Activated naive CD4-positive, alpha-beta T cell treated with anti-CD3 and anti-CD28 coated beads for 36 hours (primary cell): ENCODE measurements at regions of chr7 and their contacts with region 1.

Region 1: DNA sequence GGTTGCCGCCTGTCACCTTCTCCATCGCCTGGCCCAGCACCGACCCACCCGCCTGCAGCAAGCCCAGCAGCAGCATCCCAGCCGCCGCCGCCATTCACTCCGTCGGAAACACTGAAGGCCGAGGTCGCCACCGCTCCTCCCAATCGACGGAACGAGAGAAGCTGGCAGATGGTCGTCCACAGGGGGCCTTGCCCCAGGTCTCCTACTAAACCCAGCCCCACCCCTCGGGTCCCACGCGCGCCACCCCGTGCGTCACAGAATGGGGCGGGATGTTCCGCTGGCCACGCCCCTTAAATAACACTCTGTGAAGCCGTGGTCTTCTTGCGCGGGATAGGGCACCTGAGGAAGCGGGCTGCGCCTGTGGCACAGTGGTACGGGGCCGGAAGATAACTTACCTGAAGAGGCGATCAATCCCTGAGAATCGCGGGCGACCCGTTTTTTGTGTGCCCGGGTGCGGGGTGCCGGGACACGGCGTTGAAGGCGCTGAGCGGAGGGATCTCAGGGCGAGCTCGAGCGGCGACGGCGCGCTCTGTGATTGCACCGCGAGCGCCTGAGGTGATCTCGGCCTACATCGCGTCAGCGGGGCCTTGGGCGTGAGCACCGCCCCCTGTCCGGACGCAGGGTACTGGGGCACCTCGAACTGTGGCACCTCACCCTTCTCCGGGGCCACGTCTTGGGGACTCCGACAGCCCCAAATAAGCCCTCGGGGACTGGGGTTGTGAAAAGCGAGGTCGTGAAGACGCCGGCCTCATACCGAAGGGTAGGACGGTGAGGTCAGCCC is at the start of gene CYP51A1:
- DNase-seq: peak; percentile 93
- H3K4me3 Mint-ChIP-seq: peak within 1 kb of the TSS; percentile 96
- H3K27ac Mint-ChIP-seq: peak within 1 kb of the TSS; percentile 99
- H3K4me1 Mint-ChIP-seq: peaks cover 36% of the 10 kb centered on the region
- H3K27me3 Mint-ChIP-seq: no peaks in the 10 kb centered on the region
- total RNA-seq, gene CYP51A1: 52.8 to 55.5 TPM

Region 2: DNA sequence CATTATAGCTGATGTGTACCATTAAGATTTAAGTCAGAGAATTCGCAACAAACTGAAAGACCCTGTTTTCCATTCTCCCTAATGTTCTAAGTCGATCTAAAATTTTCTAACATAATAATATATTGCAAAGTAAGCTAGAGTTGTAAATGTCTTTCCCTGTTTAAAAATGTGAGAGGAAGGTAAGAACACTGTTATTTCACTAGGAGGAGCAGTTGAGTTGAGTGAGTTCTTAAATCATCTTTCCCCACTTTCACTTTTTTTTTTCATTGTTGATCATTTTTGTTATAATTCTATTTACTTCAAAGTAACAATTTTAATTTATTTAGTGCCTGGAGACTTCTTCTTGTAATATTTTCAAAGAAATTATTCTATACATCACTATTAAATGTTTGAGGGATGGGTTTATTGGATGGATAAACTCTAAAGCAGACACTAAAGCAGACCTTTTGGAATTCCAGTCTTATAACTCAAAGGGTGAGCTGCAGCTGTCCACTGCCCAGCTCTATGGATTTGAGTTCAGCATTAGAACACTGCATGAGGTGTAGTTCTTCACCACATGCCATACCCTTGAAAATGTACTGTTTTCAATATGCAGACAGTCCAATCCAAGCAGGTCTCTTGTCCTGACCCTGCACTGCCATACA is 1051.5 kb before region 1 on chr7:
- CTCF ChIA-PET with region 1: no interaction called
- intact Hi-C with region 1: loop called (anchors 1 kb)
- DNase-seq: no peak
- H3K4me3 Mint-ChIP-seq: peak overlapping the region; percentile 13
- H3K27ac Mint-ChIP-seq: no peak overlapping the region
- H3K4me1 Mint-ChIP-seq: peaks cover 36% of the 10 kb centered on the region
- H3K27me3 Mint-ChIP-seq: no peaks in the 10 kb centered on the region

Region 3: DNA sequence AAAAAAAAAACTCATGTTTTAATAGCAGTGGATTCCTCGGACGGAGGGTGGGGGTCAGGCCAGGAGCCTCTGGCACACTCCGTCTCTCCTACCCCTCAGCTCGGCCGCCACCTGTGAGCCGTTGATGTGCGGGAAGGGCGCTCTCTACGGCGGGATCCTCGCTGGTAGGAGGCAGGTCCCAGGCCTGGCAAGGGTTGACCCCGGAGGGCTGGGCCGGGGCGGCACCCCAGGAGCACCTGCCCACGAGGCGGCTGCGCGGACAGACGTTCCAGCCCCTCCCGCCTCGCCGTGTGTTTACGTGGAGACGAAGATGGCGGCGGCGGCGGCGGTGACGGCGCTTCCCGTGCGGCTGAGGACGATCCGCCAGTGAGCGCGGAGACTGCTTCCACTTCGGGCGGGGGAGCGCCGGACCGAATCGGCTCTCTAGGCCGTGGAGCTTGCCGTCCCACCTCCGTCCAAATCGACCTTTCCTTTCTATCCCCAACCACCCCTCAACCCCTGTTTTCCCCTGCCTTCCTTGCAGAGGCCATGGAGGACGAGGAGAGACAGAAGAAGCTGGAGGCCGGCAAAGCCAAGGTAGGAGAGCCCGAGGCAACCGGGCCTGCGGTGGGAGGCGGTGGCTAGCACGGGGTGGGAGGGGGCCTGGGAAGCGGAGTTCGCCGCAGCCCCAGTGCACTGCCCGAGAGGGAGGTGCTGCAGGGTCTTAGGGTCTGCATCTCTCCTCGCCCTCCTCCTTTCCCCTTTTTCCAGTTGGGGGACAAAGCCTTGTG is 193.7 kb before region 1 on chr7 and contains the start of gene AKAP9:
- CTCF ChIA-PET with region 1: no interaction called
- intact Hi-C with region 1: loop called (anchors 1 kb)
- DNase-seq: peak; percentile 91
- H3K4me3 Mint-ChIP-seq: peak within 1 kb of the TSS; percentile 90
- H3K27ac Mint-ChIP-seq: peak within 1 kb of the TSS; percentile 94
- H3K4me1 Mint-ChIP-seq: peaks cover 29% of the 10 kb centered on the region
- H3K27me3 Mint-ChIP-seq: no peaks in the 10 kb centered on the region
- total RNA-seq, gene AKAP9: 20.0 to 26.2 TPM

Region 4: DNA sequence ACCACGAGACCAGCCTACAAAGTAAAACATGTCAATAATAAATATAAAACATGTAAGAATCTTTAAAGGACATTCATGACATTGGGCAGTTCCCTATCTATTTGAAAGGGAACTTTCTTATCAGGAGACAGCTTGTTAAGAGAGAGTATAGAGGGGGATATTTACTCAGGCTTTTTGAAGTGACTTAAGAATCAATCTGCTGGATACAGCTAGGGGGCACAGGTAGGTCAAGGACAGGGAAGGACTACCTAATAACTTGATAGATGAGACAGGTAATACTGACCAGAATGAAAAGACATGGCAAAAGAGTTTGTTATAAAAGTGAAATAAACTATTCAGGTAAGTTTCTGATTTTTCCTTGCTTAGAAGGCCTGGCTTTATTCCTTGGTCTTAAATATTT is 66.3 kb after region 1 on chr7:
- CTCF ChIA-PET with region 1: no interaction called
- intact Hi-C with region 1: no loop called
- DNase-seq: no peak
- H3K4me3 Mint-ChIP-seq: no peak overlapping the region
- H3K27ac Mint-ChIP-seq: no peak overlapping the region
- H3K4me1 Mint-ChIP-seq: no peaks in the 10 kb centered on the region
- H3K27me3 Mint-ChIP-seq: no peaks in the 10 kb centered on the region

Region 5: GRCh38 chr7:92245487-92246362 is 111.3 kb after region 1 on chr7 and contains the starts of genes ANKIB1 and KRIT1:
- CTCF ChIA-PET with region 1: no interaction called
- intact Hi-C with region 1: loop called (anchors 1 kb)
- DNase-seq: peak; percentile 91
- H3K4me3 Mint-ChIP-seq: peak within 1 kb of the TSS; percentile 92
- H3K27ac Mint-ChIP-seq: peak within 1 kb of the TSS; percentile 95
- H3K4me1 Mint-ChIP-seq: peaks cover 33% of the 10 kb centered on the region
- H3K27me3 Mint-ChIP-seq: no peaks in the 10 kb centered on the region
- total RNA-seq, gene ANKIB1: 37.9 to 38.4 TPM
- total RNA-seq, gene KRIT1: 21.5 to 27.9 TPM

Region 6: GRCh38 chr7:92584996-92585395 is 450.5 kb after region 1 on chr7:
- CTCF ChIA-PET with region 1: no interaction called
- intact Hi-C with region 1: loop called (anchors 5 kb)
- DNase-seq: peak; percentile 22
- H3K4me3 Mint-ChIP-seq: peak overlapping the region; percentile 6
- H3K27ac Mint-ChIP-seq: peak overlapping the region; percentile 72
- H3K4me1 Mint-ChIP-seq: peaks cover 57% of the 10 kb centered on the region
- H3K27me3 Mint-ChIP-seq: no peaks in the 10 kb centered on the region